CD4-positive, alpha-beta T cell (primary cell): ENCODE measurements at regions of chr4 and their contacts with region 1.

Region 1: DNA sequence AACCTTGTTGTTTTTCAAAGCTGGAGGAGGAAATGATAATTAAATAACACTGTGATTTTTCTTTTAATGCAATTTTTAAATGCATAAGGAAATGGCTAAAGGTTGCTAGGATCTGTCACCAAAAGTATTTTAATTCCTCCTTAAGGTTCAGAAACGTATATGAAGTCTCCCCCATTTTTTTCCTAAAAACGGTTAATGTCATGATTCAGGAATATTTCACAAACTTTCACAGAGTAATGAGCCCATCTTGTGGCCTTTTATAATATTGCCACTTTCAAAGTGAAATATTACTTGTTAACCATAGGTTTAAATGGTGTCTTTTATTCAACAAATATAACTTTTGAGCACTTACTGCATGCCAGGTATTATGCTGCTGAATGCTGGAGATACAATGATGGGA is 99.5 kb upstream of the USP38 start:
- DNase-seq: no peak
- ATAC-seq: no peak
- H3K4me3 ChIP-seq: no peak overlapping the region
- H3K4me3 Mint-ChIP-seq: no peak overlapping the region
- H3K27ac ChIP-seq: no peak overlapping the region
- H3K27ac Mint-ChIP-seq: no peak overlapping the region
- H3K4me1 ChIP-seq: no peaks in the 10 kb centered on the region
- H3K4me1 Mint-ChIP-seq: no peaks in the 10 kb centered on the region
- H3K27me3 ChIP-seq: peaks cover 0 to 10% of the 10 kb centered on the region in 2 experiments
- H3K27me3 Mint-ChIP-seq: no peaks in the 10 kb centered on the region
- CTCF ChIP-seq: no peak

Region 2: DNA sequence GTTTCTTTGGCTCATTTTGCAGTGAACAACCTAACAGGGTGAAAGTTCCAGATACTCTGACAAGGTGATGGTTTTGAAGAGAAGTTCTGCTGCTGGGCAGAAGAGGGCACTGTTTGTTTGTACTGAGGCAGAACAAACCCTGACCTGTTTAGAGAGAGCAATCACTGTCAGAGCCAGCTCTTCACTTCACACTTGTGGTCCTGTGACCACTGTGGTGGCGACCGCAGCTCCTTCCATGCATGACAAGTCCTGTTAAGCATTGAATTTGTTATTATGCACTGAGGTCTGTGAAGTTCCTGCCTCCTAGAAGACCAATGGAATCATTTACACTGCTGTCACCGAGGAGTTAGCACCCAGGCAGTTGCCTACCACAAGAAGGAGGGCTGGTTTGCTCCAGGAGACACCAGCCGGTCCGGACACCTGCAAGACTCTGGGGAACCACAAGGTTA is 1778.0 kb before region 1 on chr4:
- CTCF ChIA-PET with region 1: no interaction called
- POLR2A ChIA-PET with region 1: no interaction called
- intact Hi-C with region 1: loop called in 1 of 2 experiments (anchors 10 kb)
- DNase-seq: peak; percentile 6 to 78 (median 28)
- ATAC-seq: peak; percentile 93
- H3K4me3 ChIP-seq: no peak overlapping the region
- H3K4me3 Mint-ChIP-seq: no peak overlapping the region
- H3K27ac ChIP-seq: no peak overlapping the region
- H3K27ac Mint-ChIP-seq: no peak overlapping the region
- H3K4me1 ChIP-seq: peaks cover 3% of the 10 kb centered on the region
- H3K4me1 Mint-ChIP-seq: no peaks in the 10 kb centered on the region
- H3K27me3 ChIP-seq: no peaks in the 10 kb centered on the region
- H3K27me3 Mint-ChIP-seq: peaks cover 4% of the 10 kb centered on the region
- CTCF ChIP-seq: peak; percentile 70

Region 3: GRCh38 chr4:142901166-142901662 is 184.0 kb before region 1 on chr4:
- CTCF ChIA-PET with region 1: no interaction called
- POLR2A ChIA-PET with region 1: no interaction called
- intact Hi-C with region 1: no loop called
- DNase-seq: no peak
- ATAC-seq: no peak
- H3K4me3 ChIP-seq: no peak overlapping the region
- H3K4me3 Mint-ChIP-seq: no peak overlapping the region
- H3K27ac ChIP-seq: no peak overlapping the region
- H3K27ac Mint-ChIP-seq: no peak overlapping the region
- H3K4me1 ChIP-seq: no peaks in the 10 kb centered on the region
- H3K4me1 Mint-ChIP-seq: no peaks in the 10 kb centered on the region
- H3K27me3 ChIP-seq: peaks cover 0 to under 1% of the 10 kb centered on the region in 2 experiments
- H3K27me3 Mint-ChIP-seq: peaks cover 4% of the 10 kb centered on the region
- CTCF ChIP-seq: no peak

Region 4: DNA sequence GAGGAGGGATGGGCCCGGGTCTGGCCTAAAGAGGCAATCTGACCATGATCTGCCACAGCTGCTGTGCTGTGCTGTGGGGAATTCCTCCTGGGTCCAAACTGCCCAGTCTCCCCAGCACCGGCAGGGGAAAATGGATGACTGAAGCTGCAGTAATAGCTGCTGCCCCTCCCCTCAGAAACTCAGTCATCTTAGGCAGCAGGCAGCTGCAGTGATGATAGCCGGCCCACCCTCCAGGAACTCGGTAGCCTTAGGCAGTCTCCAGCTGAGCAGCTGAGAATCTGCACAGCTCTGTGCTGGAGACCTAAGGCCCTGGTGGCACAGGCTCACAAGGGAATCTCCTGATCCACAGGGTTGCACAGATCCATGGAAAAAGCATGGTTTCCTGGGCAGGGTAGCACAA is 13.9 kb before region 1 on chr4:
- CTCF ChIA-PET with region 1: no interaction called
- POLR2A ChIA-PET with region 1: no interaction called
- intact Hi-C with region 1: no loop called
- DNase-seq: no peak
- ATAC-seq: no peak
- H3K4me3 ChIP-seq: no peak overlapping the region
- H3K4me3 Mint-ChIP-seq: no peak overlapping the region
- H3K27ac ChIP-seq: no peak overlapping the region
- H3K27ac Mint-ChIP-seq: no peak overlapping the region
- H3K4me1 ChIP-seq: no peaks in the 10 kb centered on the region
- H3K4me1 Mint-ChIP-seq: no peaks in the 10 kb centered on the region
- H3K27me3 ChIP-seq: peaks cover 0 to 2% of the 10 kb centered on the region in 2 experiments
- H3K27me3 Mint-ChIP-seq: no peaks in the 10 kb centered on the region
- CTCF ChIP-seq: no peak